Prostate gland (tissue), 2 donors: ENCODE measurements at regions of chr6 and their contacts with region 1.

Region 1: DNA sequence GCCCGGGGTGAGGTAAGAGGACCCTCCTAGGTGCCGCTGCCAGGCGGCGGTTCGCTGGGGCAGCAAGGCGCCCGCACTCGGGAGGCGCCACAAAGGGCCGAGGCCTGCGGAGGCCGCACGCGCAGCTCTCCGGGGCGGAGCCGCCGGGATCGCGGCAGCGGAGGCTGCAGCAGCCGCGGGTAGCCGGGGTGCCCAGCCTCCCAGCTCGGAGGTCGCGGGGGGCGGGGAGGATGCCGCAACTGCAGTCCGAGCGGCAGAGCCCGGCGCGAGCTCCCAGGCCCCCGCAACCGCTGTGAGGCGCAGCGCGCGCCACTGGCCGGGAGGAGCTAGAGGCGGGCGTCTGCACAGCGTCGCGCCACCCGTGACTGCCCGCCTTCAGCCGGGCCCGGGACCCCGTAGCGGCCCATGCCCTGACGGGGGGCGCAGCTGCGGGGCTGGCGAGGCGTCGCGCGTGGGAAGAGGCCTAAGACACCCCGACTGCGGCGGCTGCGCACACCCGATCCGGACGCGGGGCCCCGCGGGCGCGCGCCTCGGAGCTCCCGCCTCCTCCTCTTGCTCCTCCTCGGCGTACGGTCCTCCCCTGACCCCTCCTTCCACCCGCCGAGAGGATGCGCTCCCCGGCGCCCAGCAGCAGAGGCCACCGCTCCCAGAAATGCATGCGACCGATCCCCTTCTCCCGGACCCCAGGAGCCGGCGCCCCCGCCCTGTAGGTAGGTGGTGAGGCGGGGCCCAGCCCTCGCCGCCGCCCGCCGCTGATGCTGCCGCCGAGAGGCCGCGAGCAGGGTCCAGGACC is at the start of gene NCOA7:
- DNase-seq: peak; percentile 74
- H3K4me3 ChIP-seq: peak within 1 kb of the TSS; percentile 52 to 78
- H3K27ac ChIP-seq: peak within 1 kb of the TSS; percentile 94 to 95
- H3K4me1 ChIP-seq: peaks cover 6% of the 10 kb centered on the region
- H3K27me3 ChIP-seq: no peaks in the 10 kb centered on the region
- CTCF ChIP-seq: peak in 2 of 4 experiments; percentile 18 to 42
- POLR2A ChIP-seq: peak; percentile 83
- total RNA-seq, gene NCOA7: 15.5 to 15.6 TPM

Region 2: DNA sequence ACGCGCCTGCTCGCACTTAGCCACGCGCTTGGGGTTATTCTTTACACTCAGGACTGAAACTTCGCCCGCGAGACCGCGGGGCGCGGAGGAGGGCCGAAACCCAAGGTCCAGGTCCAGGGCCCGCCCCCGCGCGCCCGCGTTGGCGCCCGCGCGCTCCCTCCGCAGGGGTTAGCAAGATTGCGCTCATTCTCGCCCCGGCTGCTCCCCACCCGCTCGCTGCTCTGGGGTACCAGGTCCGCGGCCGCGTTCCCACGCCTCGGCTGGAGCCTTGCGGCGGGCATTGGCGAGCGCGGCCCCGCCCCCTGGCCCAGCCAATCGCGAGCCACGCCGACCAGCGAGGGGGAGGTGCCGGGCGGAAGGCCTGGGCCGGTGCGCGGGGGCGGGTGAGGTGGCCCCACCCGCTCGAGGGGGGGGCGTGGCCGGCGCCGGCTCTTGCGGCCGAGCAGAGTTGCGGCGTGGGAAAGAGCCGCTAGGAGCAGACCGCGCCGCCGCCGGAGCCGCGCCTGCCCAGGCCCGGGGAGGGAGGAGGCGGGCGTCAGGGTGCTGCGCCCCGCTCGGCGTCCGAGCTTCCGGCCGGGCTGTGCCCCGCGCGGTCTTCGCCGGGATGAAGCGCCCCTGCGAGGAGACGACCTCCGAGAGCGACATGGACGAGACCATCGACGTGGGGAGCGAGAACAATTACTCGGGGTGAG is 41.2 kb before region 1 on chr6 and contains the start of gene HEY2:
- intact Hi-C with region 1: no loop called
- DNase-seq: peak; percentile 91
- H3K4me3 ChIP-seq: peak within 1 kb of the TSS; percentile 60 to 63
- H3K27ac ChIP-seq: peak within 1 kb of the TSS; percentile 73 to 82
- H3K4me1 ChIP-seq: peaks cover 4% of the 10 kb centered on the region
- H3K27me3 ChIP-seq: no peaks in the 10 kb centered on the region
- CTCF ChIP-seq: peak in 2 of 4 experiments; percentile 27 to 35
- POLR2A ChIP-seq: peak; percentile 60
- total RNA-seq, gene HEY2: 1.0 to 5.3 TPM

Region 3: DNA sequence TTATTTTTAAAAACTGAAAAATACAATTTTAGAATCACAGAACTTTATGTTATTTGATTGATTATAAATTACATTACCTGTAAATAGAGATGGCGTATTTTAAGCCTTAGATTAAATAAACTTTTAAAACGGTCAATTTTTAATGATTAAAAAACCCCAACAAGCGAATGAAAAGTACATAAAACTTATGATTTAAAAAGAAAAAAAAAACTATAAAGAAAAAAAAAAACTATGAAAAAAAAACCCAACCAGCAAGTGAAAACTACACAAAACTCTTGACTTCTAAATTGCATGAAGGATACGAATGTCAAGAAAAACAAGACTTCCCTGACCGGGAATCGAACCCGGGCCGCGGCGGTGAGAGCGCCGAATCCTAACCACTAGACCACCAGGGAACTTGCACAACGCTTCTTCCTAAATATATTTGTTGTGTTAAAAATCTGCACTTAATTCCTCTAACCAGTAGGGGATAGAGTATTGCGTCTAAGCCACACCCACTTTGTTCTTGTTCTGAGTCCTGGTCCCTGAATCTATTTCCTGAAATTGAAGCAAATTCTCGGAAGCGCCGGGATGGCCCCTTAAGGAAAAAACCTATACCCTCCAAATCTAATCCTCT is 10.5 kb before region 1 on chr6:
- intact Hi-C with region 1: loop called (anchors 1 kb)
- DNase-seq: peak; percentile 86
- H3K4me3 ChIP-seq: peak overlapping the region; percentile 42 to 43
- H3K27ac ChIP-seq: peak overlapping the region; percentile 76 to 80
- H3K4me1 ChIP-seq: no peaks in the 10 kb centered on the region
- H3K27me3 ChIP-seq: no peaks in the 10 kb centered on the region
- CTCF ChIP-seq: peak; percentile 16 to 83 (median 48)
- POLR2A ChIP-seq: peak; percentile 34

Region 4: DNA sequence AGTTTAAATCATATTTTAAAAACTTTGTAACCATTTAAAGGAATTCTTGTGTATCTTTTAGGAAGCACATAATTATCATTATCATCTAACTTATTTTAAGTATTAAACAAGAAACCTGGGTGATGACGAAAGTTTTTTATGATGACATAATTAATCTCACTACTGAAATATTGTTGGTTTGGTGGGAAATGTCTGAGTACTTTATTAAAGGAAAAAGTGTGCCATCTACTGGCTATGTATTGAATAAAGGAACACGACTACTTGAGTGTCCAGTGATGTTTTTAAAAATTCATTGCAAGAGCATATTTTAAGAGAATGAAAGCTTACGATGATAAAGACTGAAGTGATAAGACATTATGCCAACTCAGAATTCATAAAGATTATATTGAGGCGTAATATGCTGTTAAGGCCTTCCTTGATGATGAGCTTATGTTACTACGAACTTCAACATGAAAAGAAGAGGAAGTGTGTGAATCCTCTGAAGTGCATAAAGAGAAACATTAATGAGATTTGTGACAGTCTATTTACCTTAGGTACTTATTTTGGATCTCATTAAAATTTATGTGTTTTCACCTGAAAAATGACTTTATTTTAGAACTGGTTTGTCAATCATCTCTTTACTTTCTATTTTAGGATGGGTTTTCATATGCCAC is 183.8 kb after region 1 on chr6:
- intact Hi-C with region 1: loop called (anchors 5 kb)
- DNase-seq: no peak
- H3K4me3 ChIP-seq: no peak overlapping the region
- H3K27ac ChIP-seq: no peak overlapping the region
- H3K4me1 ChIP-seq: no peaks in the 10 kb centered on the region
- H3K27me3 ChIP-seq: no peaks in the 10 kb centered on the region
- CTCF ChIP-seq: peak in 3 of 4 experiments; percentile 43 to 68 (median 66)
- POLR2A ChIP-seq: no peak